Aorta (tissue), 5 donors: ENCODE measurements at regions of chr6 and their contacts with region 1.

Region 1: GRCh38 chr6:142692942-142693341 is 252.0 kb downstream of the HIVEP2 start:
- DNase-seq: peak; percentile 73 to 85
- ATAC-seq: peak; percentile 90
- H3K4me3 ChIP-seq: no peak overlapping the region
- H3K27ac ChIP-seq: peak overlapping the region in 1 of 2 donors; percentile 48
- H3K4me1 ChIP-seq: peaks cover 0 to 3% of the 10 kb centered on the region in 2 donors
- H3K27me3 ChIP-seq: no peaks in the 10 kb centered on the region

Region 2: DNA sequence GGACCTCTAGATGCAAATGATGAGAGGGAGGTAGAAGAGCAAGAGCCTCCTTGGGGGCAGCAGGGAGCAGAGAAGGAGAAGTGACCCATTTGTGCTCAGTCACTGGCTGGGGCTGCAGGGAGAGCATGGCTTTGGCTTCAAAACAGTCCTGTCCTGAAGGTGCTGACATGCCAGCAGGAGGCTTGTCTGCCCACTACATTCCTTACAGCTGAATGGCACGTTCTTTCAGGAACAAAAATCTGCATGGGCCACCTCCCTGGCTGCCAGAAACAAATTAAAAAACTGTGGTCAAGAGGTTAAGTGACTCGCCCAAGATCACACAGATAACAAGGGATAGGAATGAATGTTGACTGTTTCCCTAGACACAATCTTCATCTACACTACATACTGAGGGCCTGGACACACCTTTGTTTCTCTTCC is 63.3 kb after region 1 on chr6:
- intact Hi-C with region 1: loop called in 1 of 2 experiments (anchors 10 kb)
- DNase-seq: no peak
- ATAC-seq: no peak
- H3K4me3 ChIP-seq: no peak overlapping the region
- H3K27ac ChIP-seq: no peak overlapping the region
- H3K4me1 ChIP-seq: no peaks in the 10 kb centered on the region
- H3K27me3 ChIP-seq: no peaks in the 10 kb centered on the region

Region 3: GRCh38 chr6:142885182-142885867 is 192.4 kb after region 1 on chr6:
- intact Hi-C with region 1: loop called (anchors 5 to 10 kb)
- DNase-seq: no peak
- ATAC-seq: peak; percentile 83
- H3K4me3 ChIP-seq: peak overlapping the region; percentile 27 to 32
- H3K27ac ChIP-seq: peak overlapping the region; percentile 7 to 32
- H3K4me1 ChIP-seq: peaks cover 0 to 5% of the 10 kb centered on the region in 2 donors
- H3K27me3 ChIP-seq: no peaks in the 10 kb centered on the region

Region 4: GRCh38 chr6:142946181-142946923 is 253.4 kb after region 1 on chr6:
- intact Hi-C with region 1: loop called (anchors 5 kb)
- DNase-seq: peak; percentile 99
- ATAC-seq: peak; percentile 92
- H3K4me3 ChIP-seq: peak overlapping the region; percentile 69 to 98
- H3K27ac ChIP-seq: peak overlapping the region; percentile 96 to 99
- H3K4me1 ChIP-seq: no peaks in the 10 kb centered on the region
- H3K27me3 ChIP-seq: no peaks in the 10 kb centered on the region

Region 5: DNA sequence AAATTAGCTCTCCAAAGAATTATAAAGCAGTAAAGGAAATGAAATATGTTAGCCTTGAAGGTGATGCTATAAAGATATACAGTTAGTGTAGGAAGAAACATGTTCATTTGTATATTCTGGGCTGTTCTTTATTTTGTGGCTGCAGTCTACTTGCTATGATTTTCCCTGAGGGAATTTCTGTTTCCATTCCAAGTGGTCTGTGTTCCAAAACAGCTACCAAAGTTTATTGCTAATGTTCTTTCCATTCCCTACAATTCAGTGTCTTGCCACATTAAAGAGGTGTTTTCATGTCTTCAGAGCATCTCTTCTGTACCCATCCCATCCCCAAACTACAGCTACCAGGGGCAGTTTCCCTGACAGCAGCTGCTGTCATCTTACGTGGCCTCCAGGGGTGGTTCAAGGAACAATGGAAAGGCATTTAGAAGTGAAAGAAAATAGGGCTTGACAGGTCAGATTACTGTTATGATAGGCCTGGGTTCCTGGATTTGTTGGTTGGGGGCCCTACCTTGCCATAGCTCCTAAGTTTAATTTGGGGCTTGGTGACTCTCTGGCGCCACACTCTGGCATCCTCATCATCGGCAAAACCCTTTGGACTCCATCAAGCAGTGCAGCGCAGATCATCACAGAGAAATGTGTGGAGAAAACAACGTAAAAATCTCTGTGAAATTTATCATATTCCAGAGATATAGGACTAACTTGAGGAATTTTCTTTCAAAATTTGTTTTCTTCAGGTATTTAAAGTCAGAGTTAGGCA is 333.9 kb after region 1 on chr6:
- intact Hi-C with region 1: loop called (anchors 2 kb)
- DNase-seq: peak; percentile 52 to 73
- ATAC-seq: no peak
- H3K4me3 ChIP-seq: no peak overlapping the region
- H3K27ac ChIP-seq: no peak overlapping the region
- H3K4me1 ChIP-seq: no peaks in the 10 kb centered on the region
- H3K27me3 ChIP-seq: no peaks in the 10 kb centered on the region

Region 6: DNA sequence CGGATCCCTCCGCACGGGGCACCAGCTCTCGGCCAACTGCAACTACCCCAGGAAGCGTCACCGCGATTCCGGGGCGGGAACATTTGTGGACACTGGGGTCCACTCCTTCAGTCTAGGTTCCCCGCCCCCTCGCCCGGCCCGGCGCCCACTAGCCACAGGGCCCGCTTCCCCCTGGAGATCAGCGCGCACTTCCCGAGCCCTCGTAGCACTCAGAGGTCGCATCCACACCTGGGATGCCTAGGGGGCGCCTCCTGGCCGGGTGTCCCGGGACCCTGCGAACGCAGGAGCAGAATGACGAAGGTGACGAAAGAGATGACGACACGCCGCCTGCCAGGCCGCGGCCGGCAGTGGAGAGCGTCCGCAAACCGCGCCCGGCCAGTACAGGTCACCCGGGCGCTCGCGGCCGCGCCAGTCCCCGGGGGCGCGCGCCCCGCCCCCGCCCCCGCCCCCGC is 367.4 kb after region 1 on chr6:
- intact Hi-C with region 1: loop called in 1 of 2 experiments (anchors 10 kb)
- DNase-seq: peak; percentile 92 to 95
- ATAC-seq: peak; percentile 94
- H3K4me3 ChIP-seq: peak overlapping the region; percentile 69 to 77
- H3K27ac ChIP-seq: peak overlapping the region; percentile 78 to 80
- H3K4me1 ChIP-seq: no peaks in the 10 kb centered on the region
- H3K27me3 ChIP-seq: no peaks in the 10 kb centered on the region

Region 7: GRCh38 chr6:143427109-143427817 is 734.3 kb after region 1 on chr6:
- intact Hi-C with region 1: loop called (anchors 1 to 2 kb)
- DNase-seq: peak; percentile 81 to 89
- ATAC-seq: peak; percentile 94
- H3K4me3 ChIP-seq: no peak overlapping the region
- H3K27ac ChIP-seq: no peak overlapping the region
- H3K4me1 ChIP-seq: peaks cover 0 to 3% of the 10 kb centered on the region in 2 donors
- H3K27me3 ChIP-seq: no peaks in the 10 kb centered on the region